PC-3 (cell line): ENCODE measurements at regions of chr18 and their contacts with region 1.

Region 1: DNA sequence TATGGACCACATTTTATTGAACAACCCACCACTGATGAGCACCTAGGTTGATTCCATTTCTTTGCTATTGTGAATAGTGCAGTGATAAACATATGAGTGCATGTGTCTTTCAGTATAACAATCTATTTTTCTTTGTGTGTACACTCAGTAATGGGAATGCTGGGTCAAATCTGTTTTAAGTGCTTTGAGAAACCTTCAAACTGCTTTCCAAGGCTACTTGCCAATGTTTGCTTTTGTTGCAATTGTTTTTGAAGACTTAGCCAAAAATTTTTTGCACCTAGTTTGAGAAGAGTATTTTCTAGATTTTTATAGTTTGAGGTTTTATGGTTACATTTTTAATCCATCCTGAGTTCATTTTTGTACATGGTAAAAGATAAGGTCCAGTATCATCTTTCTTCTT is 587.4 kb upstream of the SETBP1 start:
- DNase-seq: no peak
- ATAC-seq: no peak
- H3K4me3 ChIP-seq: no peak overlapping the region
- H3K27ac ChIP-seq: no peak overlapping the region
- H3K4me1 ChIP-seq: peaks cover 7% of the 10 kb centered on the region; the same call in 1 of the 2 replicates
- H3K27me3 ChIP-seq: no peaks in the 10 kb centered on the region
- CTCF ChIP-seq: no peak

Region 2: GRCh38 chr18:43661570-43661969 is 431.7 kb before region 1 on chr18:
- CTCF ChIA-PET with region 1: no interaction called
- POLR2A ChIA-PET with region 1: no interaction called
- intact Hi-C with region 1: loop called (anchors 5 kb)
- DNase-seq: peak; percentile 64
- ATAC-seq: peak; percentile 94
- H3K4me3 ChIP-seq: no peak overlapping the region
- H3K27ac ChIP-seq: no peak overlapping the region
- H3K4me1 ChIP-seq: peaks cover 11% of the 10 kb centered on the region
- H3K27me3 ChIP-seq: no peaks in the 10 kb centered on the region
- CTCF ChIP-seq: peak; percentile 64

Region 3: DNA sequence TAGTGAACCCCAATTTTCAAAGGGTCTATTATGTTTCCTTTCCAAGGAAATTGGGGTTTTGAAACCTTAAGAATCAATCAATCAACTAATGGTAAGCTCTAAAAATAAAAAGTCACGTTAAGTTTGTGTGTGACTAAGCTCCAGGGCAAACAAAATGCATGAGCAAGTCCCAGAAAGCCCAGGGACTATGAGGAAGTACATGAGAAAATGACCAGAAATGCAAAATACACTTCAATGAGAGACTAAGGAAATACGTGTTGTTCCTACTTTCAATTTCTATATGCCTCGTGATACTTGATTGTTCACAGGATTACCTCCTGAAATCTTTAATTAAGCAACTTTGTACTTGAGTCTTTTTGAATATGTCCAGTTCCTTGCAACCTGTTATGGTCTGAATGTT is 131.5 kb before region 1 on chr18:
- CTCF ChIA-PET with region 1: no interaction called
- POLR2A ChIA-PET with region 1: no interaction called
- intact Hi-C with region 1: loop called (anchors 5 kb)
- DNase-seq: peak; percentile 33
- ATAC-seq: peak; percentile 76
- H3K4me3 ChIP-seq: peak overlapping the region; percentile 31; the same call in 1 of the 2 replicates
- H3K27ac ChIP-seq: no peak overlapping the region; the same call in 1 of the 2 replicates
- H3K4me1 ChIP-seq: no peaks in the 10 kb centered on the region
- H3K27me3 ChIP-seq: no peaks in the 10 kb centered on the region
- CTCF ChIP-seq: no peak